ENCODE measurements at regions of chr19 and their contacts with region 1.

Region 1: GRCh38 chr19:782185-782877 is 14.9 kb upstream of the PTBP1 start:
- DNase-seq: peak; percentile 89
- ATAC-seq: peak; percentile 85
- H3K4me3 ChIP-seq: peak overlapping the region; percentile 74 to 86 (median 76)
- H3K27ac ChIP-seq: peak overlapping the region; percentile 85
- H3K4me1 ChIP-seq: peaks cover 56% of the 10 kb centered on the region
- H3K27me3 ChIP-seq: no peaks in the 10 kb centered on the region
- CTCF ChIP-seq: no peak
- EP300 ChIP-seq: peak in 1 of 2 experiments; percentile 52; a peak in 1 of 4 replicates
- POLR2A ChIP-seq: peak; percentile 48 to 85; a peak in 3 of 4 replicates
- RAD21 ChIP-seq: peak; percentile 22; the same call in 1 of the 2 replicates

Region 2: DNA sequence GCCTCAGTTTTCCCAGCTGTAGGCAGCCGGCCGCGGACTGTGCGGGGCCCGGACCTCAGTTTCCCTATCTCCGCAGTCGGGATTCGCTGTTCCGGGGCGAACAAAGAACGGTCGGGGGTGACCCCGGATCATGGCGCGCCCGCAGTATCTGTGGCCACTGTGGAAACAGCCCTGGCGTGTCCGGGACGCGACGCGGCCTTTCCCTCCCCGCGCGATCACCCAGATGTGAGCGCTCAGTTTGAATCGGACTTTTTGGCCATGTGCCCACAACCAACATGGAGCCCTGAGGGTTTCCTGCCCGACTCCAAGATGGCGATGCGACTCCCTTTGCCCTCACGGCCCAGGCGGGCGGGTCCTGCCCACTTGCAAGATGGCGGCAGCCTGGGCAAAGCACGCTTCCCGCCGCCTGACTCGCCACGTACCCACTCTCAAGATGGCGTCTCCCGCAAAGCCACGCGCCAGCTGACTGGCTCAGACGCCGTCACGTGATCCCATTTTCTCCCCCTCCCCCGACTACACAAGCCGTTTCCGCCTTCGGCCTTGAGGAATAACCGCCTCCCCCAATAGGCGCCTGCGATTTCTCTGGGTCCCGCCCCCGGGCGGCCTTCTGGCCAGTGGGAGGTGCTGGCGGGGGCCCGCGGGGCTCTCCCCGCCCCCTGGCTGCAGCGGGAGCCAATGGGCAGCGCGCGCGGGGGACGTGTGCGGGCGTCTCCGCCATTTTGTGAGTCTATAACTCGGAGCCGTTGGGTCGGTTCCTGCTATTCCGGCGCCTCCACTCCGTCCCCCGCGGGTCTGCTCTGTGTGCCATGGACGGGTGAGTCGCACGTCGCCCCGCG is 14.6 kb after region 1 on chr19 and contains the start of gene PTBP1:
- CTCF ChIA-PET with region 1: no interaction called
- POLR2A ChIA-PET with region 1: interaction called, 11 read pairs
- in situ Hi-C with region 1: no loop called
- intact Hi-C with region 1: no loop called
- DNase-seq: peak; percentile 99
- ATAC-seq: peak; percentile 66
- H3K4me3 ChIP-seq: peak within 1 kb of the TSS; percentile 85 to 96 (median 96)
- H3K27ac ChIP-seq: peak within 1 kb of the TSS; percentile 97
- H3K4me1 ChIP-seq: peaks cover 69% of the 10 kb centered on the region
- H3K27me3 ChIP-seq: no peaks in the 10 kb centered on the region; a peak in 1 of 5 replicates
- CTCF ChIP-seq: no peak
- EP300 ChIP-seq: peak; percentile 0 to 66; a peak in 2 of 4 replicates
- POLR2A ChIP-seq: peak; percentile 89 to 94
- RAD21 ChIP-seq: peak; percentile 18
- total RNA-seq, gene PTBP1: 188 and 195 TPM in 2 replicates

Region 3: DNA sequence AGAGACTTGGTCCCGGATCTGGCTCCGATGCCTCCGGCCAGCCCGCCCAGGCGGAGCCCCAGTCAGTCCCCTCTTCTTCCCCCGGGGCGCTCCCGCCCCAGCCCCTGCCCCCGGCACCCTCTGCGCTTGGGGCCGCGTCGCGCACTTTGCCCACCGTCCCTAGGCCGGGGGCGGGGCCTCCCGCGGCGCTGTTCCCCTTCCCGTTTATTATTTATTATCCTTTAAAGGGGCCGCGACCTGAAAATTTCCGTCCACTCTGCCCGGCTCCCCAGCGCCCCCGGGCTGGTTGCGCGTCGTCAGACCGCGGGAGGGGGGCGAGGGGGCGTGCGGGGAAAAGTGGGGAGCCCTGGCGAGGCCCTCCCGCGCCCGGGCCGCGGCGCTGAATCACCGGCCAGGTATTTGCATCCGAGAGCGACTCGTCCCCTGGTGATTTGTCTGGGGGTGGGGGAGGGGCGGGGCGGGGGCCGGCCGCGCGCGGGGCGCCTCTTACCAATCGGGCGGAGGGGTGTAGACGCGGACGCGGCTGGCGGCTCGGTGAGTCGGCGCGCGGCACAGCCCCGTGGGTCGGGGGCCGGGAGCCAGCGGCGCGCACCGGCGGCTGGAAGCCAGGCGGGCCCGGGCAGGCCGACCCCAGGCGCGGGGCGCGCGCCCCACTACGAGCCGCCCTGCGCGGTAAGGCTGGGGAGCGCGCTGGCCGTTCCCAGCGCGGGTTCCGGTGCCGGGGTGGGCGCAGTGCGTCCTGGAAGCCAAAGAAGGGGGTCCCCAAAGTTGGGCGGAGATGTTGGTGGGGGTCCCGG is 143.4 kb after region 1 on chr19 and contains the start of gene ARID3A:
- CTCF ChIA-PET with region 1: no interaction called
- POLR2A ChIA-PET with region 1: no interaction called
- in situ Hi-C with region 1: no loop called
- intact Hi-C with region 1: no loop called
- DNase-seq: peak; percentile 82
- ATAC-seq: peak; percentile 63
- H3K4me3 ChIP-seq: peak within 1 kb of the TSS; percentile 88 to 98 (median 96)
- H3K27ac ChIP-seq: peak within 1 kb of the TSS; percentile 92
- H3K4me1 ChIP-seq: peaks cover 45% of the 10 kb centered on the region
- H3K27me3 ChIP-seq: no peaks in the 10 kb centered on the region
- CTCF ChIP-seq: no peak
- EP300 ChIP-seq: peak in 1 of 2 experiments; percentile 32; a peak in 2 of 4 replicates
- POLR2A ChIP-seq: peak in 1 of 2 experiments; percentile 52; a peak in 3 of 4 replicates
- RAD21 ChIP-seq: no peak; the same call in 1 of the 2 replicates
- total RNA-seq, gene ARID3A: 53.8 and 71.3 TPM in 2 replicates

Region 4: DNA sequence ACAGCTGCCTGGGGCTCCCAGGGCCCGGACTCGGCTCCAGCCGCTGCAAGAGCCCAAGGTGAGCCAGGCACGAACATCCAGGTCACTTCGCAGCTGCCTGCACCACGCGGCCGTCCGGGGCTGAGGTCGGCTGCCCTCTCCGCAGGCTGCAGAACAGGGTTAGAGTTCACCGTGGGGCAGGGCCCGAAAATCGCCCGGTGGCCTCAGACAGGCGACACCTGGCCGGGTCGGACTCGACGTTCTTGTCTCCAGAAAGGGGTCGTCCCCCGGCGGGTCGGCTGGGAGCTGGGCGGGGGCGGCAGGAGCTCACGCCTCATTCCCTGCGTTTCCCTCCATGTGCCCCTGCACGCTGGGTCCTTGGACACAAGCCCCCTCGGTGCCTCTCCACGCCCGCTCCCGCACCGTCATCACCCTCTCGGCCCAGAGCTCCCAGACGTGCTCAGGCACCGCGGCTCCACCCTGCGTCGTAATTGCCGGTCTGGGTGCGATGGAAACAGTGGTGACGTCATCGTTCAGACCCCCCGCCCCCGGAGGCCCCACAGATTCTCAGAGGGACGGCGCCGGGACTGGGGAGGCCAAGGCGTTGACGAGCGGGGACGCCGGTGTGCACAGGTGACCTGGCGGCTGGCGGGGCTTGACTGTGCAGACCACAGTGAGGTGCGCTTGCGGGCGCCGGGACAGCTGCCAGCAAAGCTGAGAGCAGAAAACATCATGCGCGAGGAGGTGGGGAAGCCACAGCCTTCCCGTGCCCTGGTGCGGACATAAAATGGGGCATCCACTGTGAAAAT is 213.9 kb after region 1 on chr19:
- CTCF ChIA-PET with region 1: no interaction called
- POLR2A ChIA-PET with region 1: no interaction called
- in situ Hi-C with region 1: no loop called
- intact Hi-C with region 1: loop called (anchors 10 kb)
- DNase-seq: no peak
- ATAC-seq: no peak
- H3K4me3 ChIP-seq: no peak overlapping the region
- H3K27ac ChIP-seq: no peak overlapping the region
- H3K4me1 ChIP-seq: peaks cover 47% of the 10 kb centered on the region
- H3K27me3 ChIP-seq: peaks cover 3 to 19% of the 10 kb centered on the region in 2 experiments; a peak in 4 of 5 replicates
- CTCF ChIP-seq: no peak
- EP300 ChIP-seq: no peak
- POLR2A ChIP-seq: no peak
- RAD21 ChIP-seq: no peak

Region 5: DNA sequence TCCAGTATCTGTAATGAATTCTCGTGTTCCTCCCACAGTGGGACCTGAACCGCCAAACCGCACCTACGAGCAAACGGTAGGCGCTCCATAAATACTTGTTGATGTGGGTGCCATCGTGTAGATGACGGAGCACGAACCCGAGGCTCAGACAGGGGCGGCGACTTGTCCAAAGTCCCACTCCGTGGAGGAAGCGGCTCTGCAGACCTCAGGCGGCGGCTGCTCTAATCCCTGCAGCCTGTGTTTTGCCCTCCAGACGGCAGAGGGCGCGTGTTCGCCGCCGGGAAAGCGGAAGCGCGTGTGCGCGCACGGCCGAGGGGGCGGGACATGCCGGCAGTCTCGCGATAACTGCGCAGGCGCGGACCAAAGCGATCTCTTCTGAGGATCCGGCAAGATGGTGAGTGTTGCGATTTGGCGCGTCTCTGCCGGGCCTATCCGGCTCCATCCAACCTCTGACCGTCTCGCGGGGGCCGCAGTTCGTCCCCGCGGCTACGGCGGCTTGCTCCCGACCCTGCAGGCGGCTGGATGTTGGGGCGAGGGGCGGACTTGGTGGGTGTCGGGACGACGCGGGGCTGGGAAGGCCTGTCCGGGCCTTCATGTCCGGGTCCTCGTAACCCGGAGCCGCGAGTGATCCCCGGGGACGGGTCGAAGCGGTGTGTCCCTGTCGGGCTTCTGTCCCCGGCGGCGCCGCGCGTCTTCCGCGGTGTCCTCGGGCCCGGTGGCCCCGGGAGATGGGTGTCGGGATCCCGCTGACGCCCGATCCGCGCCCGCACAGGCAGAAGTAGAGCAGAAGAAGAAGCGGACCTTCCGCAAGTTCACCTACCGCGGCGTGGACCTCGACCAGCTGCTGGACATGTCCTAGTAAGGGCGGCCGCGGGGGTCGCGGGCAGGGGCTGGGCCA is 656.0 kb after region 1 on chr19 and contains the start of gene RPS15:
- CTCF ChIA-PET with region 1: no interaction called
- POLR2A ChIA-PET with region 1: no interaction called
- in situ Hi-C with region 1: no loop called
- intact Hi-C with region 1: no loop called
- DNase-seq: peak; percentile 91
- ATAC-seq: peak; percentile 86
- H3K4me3 ChIP-seq: peak within 1 kb of the TSS; percentile 86 to 89 (median 87)
- H3K27ac ChIP-seq: peak within 1 kb of the TSS; percentile 82
- H3K4me1 ChIP-seq: peaks cover 30% of the 10 kb centered on the region
- H3K27me3 ChIP-seq: no peaks in the 10 kb centered on the region
- CTCF ChIP-seq: peak; percentile 99
- EP300 ChIP-seq: 0 out of 4 replicates have a peak, but pooled peaks have one; percentile 20 to 56
- POLR2A ChIP-seq: peak; percentile 99
- RAD21 ChIP-seq: peak; percentile 83; the same call in 1 of the 2 replicates
- total RNA-seq, gene RPS15: 695 and 780 TPM in 2 replicates